Ascending aorta (tissue), 2 donors: ENCODE measurements at regions of chr4 and their contacts with region 1.

Region 1: DNA sequence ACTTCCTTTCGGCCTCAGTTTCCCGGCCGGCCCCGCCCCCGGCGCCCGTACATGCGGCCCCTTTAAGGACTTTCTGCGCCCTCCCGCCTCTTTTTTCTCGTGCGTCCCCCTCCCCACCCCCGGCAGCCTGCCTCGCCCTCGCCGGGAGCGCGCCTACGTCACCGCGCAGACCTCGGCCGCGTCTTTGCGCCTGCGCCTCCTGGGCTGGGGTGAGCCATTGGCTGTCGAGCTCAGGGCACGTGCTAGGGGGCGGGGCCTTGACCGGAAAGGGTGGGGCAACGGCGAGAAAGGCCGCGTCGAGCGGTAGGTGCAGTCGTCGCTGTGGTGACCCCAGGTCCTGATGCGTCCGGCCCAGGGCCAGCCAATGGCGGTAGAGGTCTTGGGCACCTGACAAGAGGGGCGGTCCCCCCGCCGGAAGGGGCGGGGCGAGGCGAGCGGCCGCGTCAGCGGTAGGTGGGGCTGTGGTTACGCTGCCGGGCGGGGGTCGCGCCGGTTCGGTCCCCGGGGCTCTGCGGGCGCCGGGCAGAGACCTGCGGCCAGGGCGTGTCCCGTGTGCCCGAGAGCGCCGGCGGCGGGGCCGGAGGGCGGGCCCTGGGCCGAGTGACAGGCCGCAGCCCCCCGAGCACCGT is at the start of gene UVSSA:
- DNase-seq: peak; percentile 100
- H3K4me3 ChIP-seq: peak within 1 kb of the TSS; percentile 90 to 97
- H3K27ac ChIP-seq: peak within 1 kb of the TSS; percentile 96 to 99
- H3K4me1 ChIP-seq: peaks cover 9 to 19% of the 10 kb centered on the region in 2 donors
- H3K27me3 ChIP-seq: no peaks in the 10 kb centered on the region
- CTCF ChIP-seq: no peak
- total RNA-seq, gene UVSSA: 56.9 TPM

Region 2: DNA sequence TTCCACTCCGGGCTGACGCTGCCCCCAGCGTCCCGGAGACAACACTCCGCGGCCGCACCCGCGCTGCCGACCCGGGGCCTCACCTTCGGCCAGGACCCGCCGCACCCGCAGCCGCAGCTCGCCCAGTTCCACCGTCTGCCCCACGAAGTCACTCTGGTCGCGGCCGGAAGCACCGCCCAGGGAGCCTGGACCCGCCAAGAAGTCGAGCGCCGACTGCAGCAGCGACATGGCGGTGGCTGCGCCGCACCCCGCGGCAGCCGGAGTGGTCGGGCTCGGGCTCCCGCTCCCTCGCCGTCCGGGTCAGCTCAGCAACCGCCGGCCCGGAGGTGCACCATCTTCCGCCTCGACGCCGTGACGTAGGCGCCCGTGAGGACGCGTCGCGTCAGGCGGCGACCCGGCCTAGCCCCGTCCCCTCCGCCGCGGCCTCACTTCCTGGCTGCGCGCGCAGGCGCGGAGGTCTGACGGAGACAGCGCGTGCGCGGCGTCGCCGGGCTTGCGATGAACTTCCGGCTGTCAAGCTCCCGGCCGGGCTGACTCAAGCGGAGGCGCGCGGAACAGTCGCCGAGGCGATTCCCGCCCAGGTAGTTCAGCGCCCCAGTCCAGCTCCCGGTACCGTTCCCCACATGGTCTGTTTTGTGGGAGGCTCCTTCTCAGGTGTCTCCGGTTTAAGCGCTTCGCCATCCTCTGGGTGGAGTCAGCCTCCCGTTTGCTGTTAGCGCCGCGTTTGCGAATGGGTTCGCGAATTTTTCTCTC is 414.8 kb before region 1 on chr4 and contains the starts of genes GAK and TMEM175:
- intact Hi-C with region 1: loop called (anchors 5 kb)
- DNase-seq: peak; percentile 80 to 98
- H3K4me3 ChIP-seq: peak within 1 kb of the TSS; percentile 76 to 82
- H3K27ac ChIP-seq: peak within 1 kb of the TSS; percentile 88
- H3K4me1 ChIP-seq: peaks cover 11 to 26% of the 10 kb centered on the region in 2 donors
- H3K27me3 ChIP-seq: no peaks in the 10 kb centered on the region
- CTCF ChIP-seq: peak in 1 of 3 experiments; percentile 2
- total RNA-seq, gene GAK: 87.3 TPM
- total RNA-seq, gene TMEM175: 41.2 TPM

Region 3: DNA sequence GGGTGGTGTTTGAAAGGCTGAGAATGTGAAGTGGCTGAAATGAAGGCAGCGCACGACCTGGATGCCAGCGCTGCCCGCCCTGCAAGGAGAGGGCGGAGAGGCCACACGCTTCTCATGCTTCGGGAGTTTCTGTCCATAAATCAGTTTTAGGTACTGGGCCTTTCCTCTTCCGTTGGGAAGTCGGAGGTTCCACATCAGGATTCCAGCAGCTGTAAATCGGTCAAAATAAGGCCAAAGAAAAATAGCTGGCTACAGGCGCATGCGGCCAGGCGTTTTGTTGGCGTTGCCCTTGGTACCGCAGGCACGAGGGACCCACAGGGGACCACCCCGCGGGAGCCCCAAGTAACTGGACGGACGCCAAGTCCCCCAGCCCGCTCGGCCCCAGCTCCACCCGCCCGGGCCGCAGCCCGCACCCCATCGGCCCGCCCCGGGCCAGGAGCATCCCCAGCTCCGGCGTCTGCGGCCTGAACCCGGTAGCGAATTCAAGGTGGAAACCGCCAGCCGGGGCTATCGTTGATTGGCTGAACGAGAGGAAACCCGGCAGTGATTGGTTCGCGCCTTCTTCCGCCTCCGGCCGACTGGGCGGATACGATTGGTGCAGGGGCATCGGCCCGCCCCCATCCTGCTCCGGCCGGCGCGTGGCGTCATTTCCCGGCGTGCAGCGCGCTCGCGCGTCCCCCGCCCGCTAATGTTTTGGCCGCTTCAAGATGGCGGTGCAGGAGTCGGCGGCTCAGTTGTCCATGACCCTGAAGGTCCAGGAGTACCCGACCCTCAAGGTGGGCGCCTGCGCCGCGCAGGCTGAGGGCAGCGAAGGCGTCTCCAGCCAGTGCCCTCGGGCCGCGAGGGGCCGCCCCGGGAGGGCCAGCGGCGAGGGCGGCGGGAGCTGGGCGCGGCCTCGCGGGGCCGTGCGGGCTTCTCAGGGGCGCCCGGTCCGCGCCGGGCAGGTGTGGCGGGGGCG is 57.4 kb before region 1 on chr4 and contains the start of gene MAEA:
- intact Hi-C with region 1: loop called (anchors 1 kb)
- DNase-seq: peak; percentile 85 to 98
- H3K4me3 ChIP-seq: peak within 1 kb of the TSS; percentile 86 to 96
- H3K27ac ChIP-seq: peak within 1 kb of the TSS; percentile 67 to 77
- H3K4me1 ChIP-seq: peaks cover 13 to 27% of the 10 kb centered on the region in 2 donors
- H3K27me3 ChIP-seq: no peaks in the 10 kb centered on the region
- CTCF ChIP-seq: no peak
- total RNA-seq, gene MAEA: 56.3 TPM

Region 4: GRCh38 chr4:1401409-1402020 is 54.6 kb after region 1 on chr4:
- intact Hi-C with region 1: no loop called
- DNase-seq: peak in 1 of 2 donors; percentile 41
- H3K4me3 ChIP-seq: no peak overlapping the region
- H3K27ac ChIP-seq: no peak overlapping the region
- H3K4me1 ChIP-seq: peaks cover 0 to 2% of the 10 kb centered on the region in 2 donors
- H3K27me3 ChIP-seq: peaks cover 40% of the 10 kb centered on the region
- CTCF ChIP-seq: no peak

Region 5: DNA sequence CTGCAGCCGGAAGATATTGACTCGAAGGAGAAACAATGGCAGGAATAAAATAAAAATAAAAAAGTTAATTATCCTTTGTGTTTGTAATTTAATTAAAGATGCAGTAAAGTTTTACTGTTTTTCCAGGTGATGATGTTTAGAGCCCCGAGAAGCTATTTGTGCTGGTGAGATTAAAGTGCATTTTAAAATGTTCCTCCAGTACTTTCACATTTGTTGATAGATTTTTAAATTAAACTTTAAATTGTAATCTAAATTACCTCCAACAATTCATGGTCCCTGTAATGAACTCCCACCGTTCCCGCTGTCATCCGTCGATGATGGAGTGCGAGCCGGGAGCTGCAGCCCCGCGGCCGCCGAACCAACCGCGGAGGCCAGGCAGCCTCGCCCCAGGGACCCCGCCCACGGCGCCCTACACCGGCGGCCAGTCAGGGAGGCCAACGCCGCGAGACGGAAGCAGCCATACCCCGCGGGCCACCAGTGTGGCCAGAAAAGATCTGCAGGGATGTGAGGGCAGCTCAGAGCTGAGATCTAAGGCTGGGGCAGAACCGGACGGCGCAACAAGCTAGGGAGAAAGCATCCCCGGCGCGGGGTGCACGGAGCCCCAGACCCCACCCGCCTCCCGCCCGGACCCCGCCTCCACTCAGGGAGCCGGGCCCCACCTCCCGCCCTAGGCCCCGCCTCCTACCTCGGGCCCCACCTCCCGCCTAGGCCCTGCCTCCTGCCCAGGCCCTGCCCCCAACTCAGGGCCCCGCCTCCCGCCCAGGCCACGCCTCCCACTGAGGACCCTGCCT is 233.2 kb after region 1 on chr4:
- intact Hi-C with region 1: loop called (anchors 1 kb)
- DNase-seq: peak; percentile 72 to 95
- H3K4me3 ChIP-seq: peak overlapping the region; percentile 58 to 95
- H3K27ac ChIP-seq: peak overlapping the region; percentile 63 to 74
- H3K4me1 ChIP-seq: peaks cover 4% of the 10 kb centered on the region in 2 donors
- H3K27me3 ChIP-seq: no peaks in the 10 kb centered on the region
- CTCF ChIP-seq: no peak

Region 6: DNA sequence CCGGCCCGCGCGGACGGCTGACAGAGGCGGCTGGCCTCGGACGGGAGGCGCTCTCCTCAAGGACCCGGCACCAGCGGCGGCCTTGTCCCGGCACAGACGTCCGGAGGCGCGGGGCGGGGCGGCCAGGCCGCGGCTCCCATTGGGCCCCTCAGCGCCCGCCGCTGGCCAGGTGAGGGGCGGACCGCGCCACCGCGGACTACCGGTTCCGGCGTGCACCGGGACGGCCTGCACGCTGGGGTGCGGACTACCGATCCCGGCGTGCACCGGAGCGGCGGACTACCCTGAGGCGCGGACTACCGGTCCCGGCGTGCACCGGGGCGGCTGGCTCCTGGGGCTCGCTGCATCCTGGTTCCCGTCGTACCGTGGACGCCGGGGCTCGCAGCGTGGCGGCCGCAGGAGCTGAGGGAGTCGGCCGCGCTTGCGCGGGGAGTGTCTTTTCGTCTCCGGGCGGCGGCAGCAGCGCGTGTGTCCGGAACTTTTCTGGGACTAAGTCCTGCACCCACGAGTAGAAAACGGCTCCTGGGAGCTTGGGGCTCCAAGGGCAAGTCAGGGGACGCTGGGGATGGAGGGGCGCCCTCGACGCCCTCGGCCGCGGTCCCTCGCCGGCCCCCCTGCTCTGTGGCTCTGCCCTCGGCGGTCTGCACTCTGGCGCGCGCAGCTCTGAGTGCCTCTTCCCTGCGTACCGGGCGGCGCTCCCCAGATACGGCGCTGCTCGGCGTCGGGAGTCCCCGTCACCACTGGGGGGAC is 509.3 kb after region 1 on chr4 and contains the start of gene LETM1:
- intact Hi-C with region 1: loop called (anchors 1 kb)
- DNase-seq: peak; percentile 86 to 97
- H3K4me3 ChIP-seq: peak within 1 kb of the TSS; percentile 85 to 86
- H3K27ac ChIP-seq: peak within 1 kb of the TSS; percentile 78 to 82
- H3K4me1 ChIP-seq: peaks cover 0 to 10% of the 10 kb centered on the region in 2 donors
- H3K27me3 ChIP-seq: no peaks in the 10 kb centered on the region
- CTCF ChIP-seq: peak in 1 of 3 experiments; percentile 28
- total RNA-seq, gene LETM1: 37.7 TPM

Region 7: GRCh38 chr4:2843263-2843940 is 1496.5 kb after region 1 on chr4 and contains the start of gene ADD1:
- intact Hi-C with region 1: loop called (anchors 10 kb)
- DNase-seq: peak; percentile 67 to 96
- H3K4me3 ChIP-seq: peak within 1 kb of the TSS; percentile 87 to 90
- H3K27ac ChIP-seq: peak within 1 kb of the TSS; percentile 93 to 96
- H3K4me1 ChIP-seq: peaks cover 3 to 31% of the 10 kb centered on the region in 2 donors
- H3K27me3 ChIP-seq: no peaks in the 10 kb centered on the region
- CTCF ChIP-seq: no peak
- total RNA-seq, gene ADD1: 261 TPM